ENCODE measurements at regions of chr5 and their contacts with region 1.

Region 1: GRCh38 chr5:142611154-142611553 is 74.7 kb downstream of the FGF1 start:
- DNase-seq: peak; percentile 62
- CTCF ChIP-seq: peak; percentile 49

Region 2: GRCh38 chr5:142699184-142699720 is 88.1 kb after region 1 on chr5:
- in situ Hi-C with region 1: loop called (anchors 10 kb)
- DNase-seq: peak; percentile 66
- CTCF ChIP-seq: peak; percentile 89